ENCODE measurements at regions of chr3 and their contacts with region 1.

Region 1: DNA sequence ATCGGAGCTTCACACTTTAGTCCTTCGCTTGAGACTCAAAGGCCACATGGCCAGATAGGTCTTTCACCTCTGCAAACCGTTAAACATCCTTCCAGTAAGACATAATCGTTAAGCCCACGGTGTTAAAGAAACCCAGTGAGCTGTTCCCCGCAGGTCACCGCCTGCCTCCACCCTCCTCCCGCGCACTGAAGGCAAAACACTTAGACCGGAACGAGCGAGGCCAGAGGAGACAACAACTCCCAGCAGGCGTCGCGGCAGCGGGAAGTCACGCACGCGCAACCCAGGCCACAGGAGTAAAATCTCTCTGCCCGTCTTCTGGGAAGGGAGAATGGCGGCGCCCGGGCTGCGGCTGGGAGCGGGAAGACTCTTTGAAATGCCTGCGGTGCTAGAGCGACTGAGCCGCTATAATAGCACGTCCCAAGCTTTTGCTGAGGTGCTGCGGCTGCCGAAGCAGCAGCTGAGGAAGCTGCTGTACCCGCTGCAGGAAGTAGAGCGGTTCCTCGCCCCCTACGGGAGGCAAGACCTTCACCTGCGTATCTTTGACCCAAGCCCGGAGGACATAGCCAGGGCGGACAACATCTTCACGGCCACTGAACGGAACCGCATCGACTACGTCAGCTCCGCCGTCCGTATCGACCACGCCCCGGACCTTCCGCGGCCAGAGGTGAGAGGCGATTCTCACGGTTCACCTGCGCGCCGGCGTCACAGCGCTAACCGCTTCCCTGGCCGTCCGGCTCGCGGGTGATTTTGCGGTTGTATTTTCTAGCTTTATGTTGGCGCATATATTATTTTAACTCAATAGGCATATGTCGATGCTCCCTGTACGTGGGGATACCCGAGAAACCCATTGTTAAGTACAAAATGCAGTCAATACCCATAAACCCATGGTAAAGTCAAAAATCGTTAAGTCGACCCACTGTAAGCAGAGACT is at the start of gene GTPBP8:
- DNase-seq: peak; percentile 88
- H3K4me3 Mint-ChIP-seq: peak within 1 kb of the TSS; percentile 80
- H3K27ac Mint-ChIP-seq: peak within 1 kb of the TSS; percentile 90
- H3K4me1 Mint-ChIP-seq: peaks cover 64% of the 10 kb centered on the region
- H3K27me3 Mint-ChIP-seq: no peaks in the 10 kb centered on the region
- total RNA-seq, gene GTPBP8: 27.7 to 28.2 TPM

Region 2: DNA sequence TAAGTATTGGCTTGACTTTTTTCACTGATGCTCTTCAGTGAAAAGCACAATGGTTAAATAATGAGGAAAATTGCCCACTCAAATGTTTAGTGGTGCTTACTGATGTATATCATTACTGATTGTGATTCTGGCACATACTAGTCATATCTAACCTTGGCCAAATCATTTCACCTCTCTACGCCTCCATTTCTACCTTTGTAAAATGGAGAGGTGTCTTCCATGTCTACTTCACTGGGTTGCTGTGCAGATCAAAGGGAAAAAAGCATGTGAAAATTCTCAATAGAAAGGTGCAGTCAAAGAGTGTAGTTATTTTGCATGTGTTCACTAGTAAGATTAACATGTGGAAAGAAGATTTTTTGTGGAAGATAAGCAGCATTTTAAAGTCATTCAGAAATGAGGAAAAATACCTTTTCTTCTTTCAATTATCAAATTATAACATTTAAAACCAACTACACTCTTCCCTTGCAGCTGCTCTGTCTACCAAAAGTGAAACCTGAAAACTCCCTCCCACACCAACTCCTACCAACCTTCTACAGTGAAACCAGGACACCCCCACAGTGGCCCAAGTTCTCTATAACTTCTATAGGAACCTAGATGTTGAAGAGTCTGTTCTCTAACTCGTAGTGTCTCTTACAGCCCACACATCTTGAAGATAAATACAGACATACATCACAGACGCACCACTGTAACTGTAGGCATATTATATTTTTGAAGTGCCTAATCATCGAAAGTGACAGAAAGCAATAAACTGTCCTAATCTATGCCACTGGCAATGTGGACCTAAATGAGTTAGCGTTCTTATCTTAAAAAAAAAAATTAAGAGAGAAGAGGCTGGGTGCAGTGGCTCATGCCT is 17.4 kb before region 1 on chr3:
- CTCF ChIA-PET with region 1: interaction called, 15 read pairs
- POLR2A ChIA-PET with region 1: interaction called, 13 read pairs
- DNase-seq: peak; percentile 44
- H3K4me3 Mint-ChIP-seq: peak overlapping the region; percentile 97
- H3K27ac Mint-ChIP-seq: peak overlapping the region; percentile 83
- H3K4me1 Mint-ChIP-seq: peaks cover 76% of the 10 kb centered on the region
- H3K27me3 Mint-ChIP-seq: peaks cover 2% of the 10 kb centered on the region

Region 3: GRCh38 chr3:112979240-112979832 is 11.6 kb before region 1 on chr3:
- CTCF ChIA-PET with region 1: interaction called, 15 read pairs
- POLR2A ChIA-PET with region 1: interaction called, 13 read pairs
- DNase-seq: no peak
- H3K4me3 Mint-ChIP-seq: no peak overlapping the region
- H3K27ac Mint-ChIP-seq: no peak overlapping the region
- H3K4me1 Mint-ChIP-seq: peaks cover 56% of the 10 kb centered on the region
- H3K27me3 Mint-ChIP-seq: no peaks in the 10 kb centered on the region

Region 4: DNA sequence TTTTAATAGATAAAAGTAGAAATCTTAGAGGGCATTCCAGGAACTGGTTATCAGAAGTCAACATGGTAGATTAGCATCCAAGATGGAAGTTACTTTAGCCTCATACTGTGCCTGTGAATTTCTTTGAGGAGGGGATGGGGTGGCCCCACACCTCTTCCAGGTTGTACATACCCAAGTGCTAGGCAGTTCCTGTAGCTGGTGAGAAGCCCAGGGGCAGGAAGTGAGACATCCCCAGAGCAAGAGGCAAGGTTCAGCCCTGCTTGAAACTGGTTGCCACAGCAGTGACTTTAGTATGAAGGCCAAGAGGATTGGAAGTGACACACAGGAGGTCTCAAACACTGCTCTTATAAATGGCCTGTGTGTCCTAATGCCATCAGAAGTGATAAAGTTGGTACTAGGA is 11.7 kb after region 1 on chr3:
- CTCF ChIA-PET with region 1: interaction called, 5 read pairs
- POLR2A ChIA-PET with region 1: interaction called, 84 read pairs
- DNase-seq: peak; percentile 70
- H3K4me3 Mint-ChIP-seq: no peak overlapping the region
- H3K27ac Mint-ChIP-seq: peak overlapping the region; percentile 58
- H3K4me1 Mint-ChIP-seq: peaks cover 69% of the 10 kb centered on the region
- H3K27me3 Mint-ChIP-seq: no peaks in the 10 kb centered on the region

Region 5: DNA sequence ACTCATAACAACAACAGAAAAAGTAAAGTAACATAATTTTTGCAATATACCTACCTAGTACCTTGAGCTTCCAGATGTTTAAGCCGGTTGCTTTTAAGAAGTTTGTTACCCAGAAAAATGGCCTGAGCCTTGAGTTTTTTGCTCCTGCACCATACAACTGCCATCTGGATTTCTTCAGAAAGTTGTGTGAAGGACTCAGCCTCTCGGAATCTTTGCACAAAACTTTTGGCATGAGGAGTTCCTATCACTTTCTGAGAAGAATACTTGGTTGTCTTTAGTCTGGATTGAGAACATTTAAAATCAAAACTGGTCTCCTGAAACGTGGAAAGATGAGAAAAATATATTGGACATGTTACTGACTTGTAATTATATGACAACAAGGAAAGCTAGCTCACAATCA is 17.2 kb after region 1 on chr3:
- CTCF ChIA-PET with region 1: interaction called, 5 read pairs
- POLR2A ChIA-PET with region 1: interaction called, 84 read pairs
- DNase-seq: no peak
- H3K4me3 Mint-ChIP-seq: no peak overlapping the region
- H3K27ac Mint-ChIP-seq: no peak overlapping the region
- H3K4me1 Mint-ChIP-seq: peaks cover 50% of the 10 kb centered on the region
- H3K27me3 Mint-ChIP-seq: no peaks in the 10 kb centered on the region

Region 6: DNA sequence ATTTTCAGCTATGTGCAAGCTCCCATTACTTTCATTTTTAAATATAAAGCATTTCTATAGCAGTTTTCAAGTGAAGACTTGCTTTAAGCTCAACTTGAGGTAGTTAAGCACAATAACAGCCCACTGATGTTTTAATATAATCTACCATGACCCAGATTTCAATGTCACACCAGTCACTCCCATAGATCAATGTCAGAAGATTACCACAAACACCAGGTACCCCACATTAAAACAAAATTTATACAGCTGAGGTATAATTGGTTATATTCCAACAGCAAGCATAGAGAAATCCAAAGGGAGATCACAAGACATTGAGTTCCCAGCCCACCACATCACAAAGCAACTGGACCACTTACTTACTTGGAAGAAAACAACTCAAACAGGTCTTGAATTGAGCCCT is 22.7 kb after region 1 on chr3:
- CTCF ChIA-PET with region 1: interaction called, 8 read pairs
- POLR2A ChIA-PET with region 1: interaction called, 48 read pairs
- DNase-seq: no peak
- H3K4me3 Mint-ChIP-seq: no peak overlapping the region
- H3K27ac Mint-ChIP-seq: peak overlapping the region; percentile 12
- H3K4me1 Mint-ChIP-seq: peaks cover 43% of the 10 kb centered on the region
- H3K27me3 Mint-ChIP-seq: no peaks in the 10 kb centered on the region

Region 7: DNA sequence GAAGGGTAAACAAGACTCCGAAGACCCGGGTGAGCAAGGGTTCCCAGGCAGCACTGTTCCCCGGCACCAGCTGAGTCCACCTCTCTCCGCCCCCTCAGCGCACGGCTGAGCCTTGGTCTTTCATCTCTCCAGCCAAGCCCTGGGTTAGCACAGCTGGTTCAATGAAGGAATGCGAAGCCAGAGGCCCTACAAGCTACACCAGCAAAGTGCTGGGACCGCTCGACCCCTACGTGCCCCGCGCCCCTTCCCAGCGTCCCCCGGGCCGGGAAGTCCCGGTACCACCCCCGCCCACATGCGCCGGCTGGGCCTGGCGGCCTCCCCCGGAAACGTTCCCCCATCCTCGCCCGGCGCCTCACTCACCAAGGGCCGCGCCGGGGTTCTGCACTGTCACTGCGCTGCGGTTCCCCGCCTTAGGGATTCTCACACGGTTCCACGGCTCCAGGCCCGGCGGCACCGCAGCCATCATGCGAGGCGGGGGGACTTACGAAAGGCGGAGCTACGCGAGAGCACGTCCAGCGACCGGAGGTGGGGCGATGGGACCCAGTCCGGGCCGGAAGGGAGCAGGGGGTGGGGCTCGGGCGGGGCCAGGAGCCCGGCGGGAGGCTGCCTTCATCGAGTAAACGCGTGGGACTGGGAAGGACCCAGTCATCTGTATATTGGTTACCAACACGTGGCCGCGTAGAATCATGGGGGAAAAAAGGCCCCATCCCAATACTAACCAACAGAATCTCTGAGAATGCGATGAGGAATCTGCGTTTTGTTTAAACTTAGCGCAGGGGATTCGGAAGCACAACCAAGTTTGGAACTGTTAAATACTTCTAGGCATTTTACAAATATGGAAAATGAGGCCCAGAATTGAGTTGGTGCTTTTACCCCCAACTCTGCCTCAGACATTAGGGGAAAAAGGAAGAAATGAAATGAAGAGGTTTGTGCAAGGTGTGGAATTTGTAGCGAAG is 28.5 kb after region 1 on chr3:
- CTCF ChIA-PET with region 1: interaction called, 8 read pairs
- POLR2A ChIA-PET with region 1: interaction called, 48 read pairs
- DNase-seq: peak; percentile 86
- H3K4me3 Mint-ChIP-seq: peak overlapping the region; percentile 80
- H3K27ac Mint-ChIP-seq: peak overlapping the region; percentile 84
- H3K4me1 Mint-ChIP-seq: peaks cover 44% of the 10 kb centered on the region
- H3K27me3 Mint-ChIP-seq: no peaks in the 10 kb centered on the region

Region 8: DNA sequence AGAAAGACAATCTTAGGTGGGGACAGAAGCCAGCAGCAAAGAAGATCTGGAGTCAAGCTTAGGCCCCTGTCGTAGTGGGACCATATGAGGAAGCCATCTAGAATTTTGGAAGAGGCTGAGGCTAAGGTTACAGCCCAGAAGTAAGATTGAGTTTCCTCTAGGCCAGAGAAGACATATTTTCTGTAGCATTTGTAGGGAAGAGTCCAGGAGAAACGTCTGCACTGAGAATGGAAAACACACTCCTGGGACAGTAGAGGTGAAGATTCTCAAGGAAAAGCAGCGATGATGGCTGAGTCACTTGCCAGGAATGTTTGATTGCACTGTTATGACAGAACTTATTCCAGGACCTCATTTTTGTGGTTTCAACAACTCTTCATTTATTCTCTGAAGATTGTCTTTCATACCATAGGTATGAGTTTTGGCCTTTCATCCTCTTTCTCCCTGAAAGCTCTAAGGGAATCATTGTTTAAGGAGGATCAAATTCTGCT is 107.1 kb after region 1 on chr3:
- CTCF ChIA-PET with region 1: no interaction called
- POLR2A ChIA-PET with region 1: no interaction called
- DNase-seq: no peak
- H3K4me3 Mint-ChIP-seq: no peak overlapping the region
- H3K27ac Mint-ChIP-seq: no peak overlapping the region
- H3K4me1 Mint-ChIP-seq: no peaks in the 10 kb centered on the region
- H3K27me3 Mint-ChIP-seq: no peaks in the 10 kb centered on the region

Measured in activated CD4-positive, alpha-beta memory T cell treated with anti-CD3 and anti-CD28 coated beads, Interleukin-2, amount 10 ng/mL, durations not matched to agents 7 days and 5 days (primary cell).